ENCODE measurements at regions of chr11 and their contacts with region 1.

Region 1: DNA sequence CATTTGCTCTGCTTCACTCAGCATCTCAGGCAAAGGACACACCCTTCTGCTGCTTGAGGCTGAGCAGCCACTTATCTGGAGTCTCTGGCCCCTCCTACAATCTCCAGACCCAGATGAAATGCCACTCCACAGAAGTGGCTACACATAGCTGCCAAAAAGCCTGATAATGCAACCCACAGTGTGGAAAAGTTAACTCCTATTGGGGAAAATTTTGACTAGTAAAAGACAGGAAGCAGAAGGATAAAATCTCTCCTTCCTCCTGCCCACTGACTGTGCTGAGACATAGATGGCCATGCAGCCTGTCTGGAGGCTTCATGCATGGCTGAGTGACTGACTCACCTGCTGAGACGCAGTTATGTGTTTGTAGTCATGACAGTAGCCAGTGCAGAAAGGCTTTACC is 92.3 kb upstream of the TEAD1 start:
- DNase-seq: no peak
- ATAC-seq: peak in 2 of 4 donors; percentile 51 to 57
- H3K4me3 ChIP-seq: no peak overlapping the region
- H3K27ac ChIP-seq: no peak overlapping the region
- H3K4me1 ChIP-seq: peaks cover 7% of the 10 kb centered on the region
- H3K27me3 ChIP-seq: no peaks in the 10 kb centered on the region
- CTCF ChIP-seq: no peak

Region 2: DNA sequence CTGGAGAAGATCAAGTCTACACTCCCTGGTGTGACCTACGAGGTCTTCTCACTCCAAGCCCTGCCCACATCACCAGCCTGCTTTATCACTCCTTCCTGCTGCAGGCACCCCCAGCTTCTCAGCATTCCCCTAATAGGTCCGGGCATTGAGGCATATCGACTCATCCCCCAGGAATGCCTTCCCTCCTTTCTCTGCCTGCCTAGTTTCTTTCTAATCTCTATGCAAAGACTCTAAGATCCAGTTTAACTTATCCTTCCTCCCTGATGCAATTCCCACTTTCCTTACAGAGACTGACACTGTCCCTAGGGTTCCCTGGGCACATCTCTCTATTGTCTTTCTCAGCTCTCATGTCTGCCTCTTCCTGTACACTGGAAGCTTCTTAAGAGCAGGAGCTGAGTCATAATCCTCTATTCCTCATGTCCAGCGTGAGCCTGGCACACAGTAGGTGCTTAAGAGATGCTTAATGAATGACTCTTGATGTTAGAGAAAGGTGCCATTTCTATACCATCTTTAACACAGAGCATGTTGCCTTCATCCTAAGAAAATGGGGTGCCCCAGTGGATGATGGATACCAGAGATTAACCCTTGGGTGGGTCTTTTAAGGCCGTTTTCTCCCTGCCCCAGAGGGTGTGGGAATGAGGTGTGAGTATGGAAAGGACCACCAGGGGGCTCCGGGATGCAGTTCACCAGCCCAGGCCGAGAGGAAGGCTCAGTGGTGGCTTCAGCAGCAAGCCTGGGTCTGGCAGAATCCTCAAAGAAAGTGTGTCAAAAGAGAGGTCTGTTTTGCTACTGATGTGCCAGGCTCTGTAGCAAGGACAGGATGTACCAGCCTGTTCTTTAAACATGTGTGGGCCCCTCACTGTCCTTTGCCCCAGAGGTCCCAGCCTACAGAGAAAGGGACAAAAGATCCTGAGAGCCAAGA is 169.9 kb before region 1 on chr11:
- intact Hi-C with region 1: loop called in 1 of 2 experiments (anchors 10 kb)
- DNase-seq: peak; percentile 68 to 79
- ATAC-seq: peak; percentile 90 to 92 (median 91)
- H3K4me3 ChIP-seq: no peak overlapping the region
- H3K27ac ChIP-seq: peak overlapping the region; percentile 30
- H3K4me1 ChIP-seq: peaks cover 26% of the 10 kb centered on the region
- H3K27me3 ChIP-seq: no peaks in the 10 kb centered on the region
- CTCF ChIP-seq: peak; percentile 66

Region 3: DNA sequence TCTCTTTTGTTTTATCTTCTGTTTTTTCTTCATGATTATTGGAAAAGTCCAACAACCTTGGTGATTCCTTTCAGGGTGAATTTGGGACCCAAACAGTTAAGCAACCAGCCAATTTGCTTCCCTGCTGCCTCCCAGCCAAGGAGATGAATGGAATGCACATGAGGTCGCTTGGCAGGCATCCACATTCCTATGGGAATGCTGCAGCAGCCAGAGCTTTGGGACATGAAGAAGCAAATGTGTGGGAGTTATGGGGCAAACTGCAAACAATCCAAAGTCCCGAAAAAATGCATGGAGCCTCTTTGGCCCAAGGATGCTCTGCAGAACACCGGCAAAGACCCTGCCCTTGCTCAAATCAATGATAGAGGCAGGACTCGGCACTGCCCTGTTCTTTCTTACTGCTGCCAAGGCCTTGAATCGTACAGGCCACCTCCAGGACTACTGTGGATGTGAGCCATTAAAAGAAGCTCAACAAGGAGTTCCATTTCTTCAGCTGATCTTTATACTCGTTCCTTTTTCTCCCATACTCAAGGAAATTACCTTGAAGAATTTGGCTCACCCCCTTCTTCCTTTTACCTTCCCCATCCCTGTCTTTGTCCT is 25.0 kb before region 1 on chr11:
- intact Hi-C with region 1: no loop called
- DNase-seq: peak; percentile 66 to 71
- ATAC-seq: peak in 1 of 4 donors; percentile 52
- H3K4me3 ChIP-seq: no peak overlapping the region
- H3K27ac ChIP-seq: no peak overlapping the region
- H3K4me1 ChIP-seq: peaks cover 11% of the 10 kb centered on the region
- H3K27me3 ChIP-seq: no peaks in the 10 kb centered on the region
- CTCF ChIP-seq: no peak

Region 4: GRCh38 chr11:12569499-12570040 is 12.4 kb before region 1 on chr11:
- intact Hi-C with region 1: no loop called
- DNase-seq: no peak
- ATAC-seq: no peak
- H3K4me3 ChIP-seq: no peak overlapping the region
- H3K27ac ChIP-seq: no peak overlapping the region
- H3K4me1 ChIP-seq: no peaks in the 10 kb centered on the region
- H3K27me3 ChIP-seq: peaks cover 0 to 2% (median 0%) of the 10 kb centered on the region in 3 donors
- CTCF ChIP-seq: no peak

Measured in psoas muscle (tissue), 8 donors.